ENCODE measurements at regions of chr19 and their contacts with region 1.

Region 1: GRCh38 chr19:54740134-54740497 is 1.8 kb downstream of the KIR2DL3 start:
- DNase-seq: no peak
- ATAC-seq: no peak
- H3K4me3 Mint-ChIP-seq: no peak overlapping the region
- H3K27ac Mint-ChIP-seq: no peak overlapping the region
- H3K4me1 Mint-ChIP-seq: no peaks in the 10 kb centered on the region
- H3K27me3 Mint-ChIP-seq: peaks cover 7% of the 10 kb centered on the region

Region 2: GRCh38 chr19:54851353-54851752 is 111.2 kb after region 1 on chr19:
- CTCF ChIA-PET with region 1: no interaction called
- POLR2A ChIA-PET with region 1: no interaction called
- intact Hi-C with region 1: loop called (anchors 1 to 2 kb)
- DNase-seq: no peak
- ATAC-seq: no peak
- H3K4me3 Mint-ChIP-seq: no peak overlapping the region
- H3K27ac Mint-ChIP-seq: no peak overlapping the region
- H3K4me1 Mint-ChIP-seq: no peaks in the 10 kb centered on the region
- H3K27me3 Mint-ChIP-seq: peaks cover 12% of the 10 kb centered on the region

Region 3: GRCh38 chr19:55227241-55228014 is 487.3 kb after region 1 on chr19:
- CTCF ChIA-PET with region 1: no interaction called
- POLR2A ChIA-PET with region 1: no interaction called
- intact Hi-C with region 1: no loop called
- DNase-seq: no peak
- ATAC-seq: no peak
- H3K4me3 Mint-ChIP-seq: no peak overlapping the region
- H3K27ac Mint-ChIP-seq: no peak overlapping the region
- H3K4me1 Mint-ChIP-seq: no peaks in the 10 kb centered on the region
- H3K27me3 Mint-ChIP-seq: no peaks in the 10 kb centered on the region